HEK293T (cell line): ENCODE measurements at regions of chr10 and their contacts with region 1.

Region 1: GRCh38 chr10:126215732-126216631 is 172.3 kb downstream of the ADAM12 start:
- DNase-seq: peak; percentile 69

Region 2: DNA sequence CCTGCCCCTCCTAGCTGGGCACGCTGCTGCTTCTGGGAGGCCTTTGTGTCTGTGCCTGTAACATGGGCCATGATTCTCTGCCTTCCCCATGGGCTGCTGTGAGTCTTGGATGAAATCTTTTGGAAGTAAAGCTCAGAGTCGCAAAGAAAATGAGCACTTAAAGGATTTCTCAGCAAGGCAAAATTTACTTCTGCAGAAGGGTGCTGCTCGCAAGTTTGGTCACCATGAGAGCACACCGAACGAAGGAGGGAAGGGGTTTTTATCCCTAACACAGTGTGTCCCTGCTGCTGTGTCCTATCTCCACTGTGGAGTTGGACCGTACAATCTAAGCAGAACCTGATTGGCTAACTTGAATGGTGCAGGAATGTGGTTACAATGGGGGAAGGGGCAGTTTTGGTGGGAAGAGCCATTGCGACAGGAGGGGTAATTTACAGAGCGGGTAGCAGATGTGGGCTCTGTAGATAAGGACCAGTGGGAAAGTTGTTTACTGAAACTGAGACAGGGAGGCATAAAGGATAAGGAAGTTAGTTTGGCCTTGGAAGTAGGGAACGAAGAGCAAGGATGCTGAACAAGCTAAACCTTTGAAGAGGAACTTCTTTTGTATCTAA is 262.1 kb before region 1 on chr10:
- CTCF ChIA-PET with region 1: no interaction called
- POLR2A ChIA-PET with region 1: no interaction called
- DNase-seq: no peak

Region 3: GRCh38 chr10:126186493-126187165 is 29.4 kb before region 1 on chr10:
- CTCF ChIA-PET with region 1: no interaction called
- POLR2A ChIA-PET with region 1: no interaction called
- DNase-seq: no peak

Region 4: GRCh38 chr10:126233222-126234148 is 17.5 kb after region 1 on chr10:
- CTCF ChIA-PET with region 1: no interaction called
- POLR2A ChIA-PET with region 1: interaction called, 11 read pairs
- DNase-seq: peak; percentile 56